ENCODE measurements at regions of chr2 and their contacts with region 1.

Region 1: GRCh38 chr2:190382851-190383250 is 25.3 kb upstream of the MFSD6 start:
- DNase-seq: peak; percentile 73
- CTCF ChIP-seq: peak; percentile 67

Region 2: GRCh38 chr2:190396271-190396670 is 13.4 kb after region 1 on chr2:
- CTCF ChIA-PET with region 1: interaction called, 12 read pairs
- POLR2A ChIA-PET with region 1: no interaction called
- DNase-seq: no peak
- CTCF ChIP-seq: no peak

Region 3: DNA sequence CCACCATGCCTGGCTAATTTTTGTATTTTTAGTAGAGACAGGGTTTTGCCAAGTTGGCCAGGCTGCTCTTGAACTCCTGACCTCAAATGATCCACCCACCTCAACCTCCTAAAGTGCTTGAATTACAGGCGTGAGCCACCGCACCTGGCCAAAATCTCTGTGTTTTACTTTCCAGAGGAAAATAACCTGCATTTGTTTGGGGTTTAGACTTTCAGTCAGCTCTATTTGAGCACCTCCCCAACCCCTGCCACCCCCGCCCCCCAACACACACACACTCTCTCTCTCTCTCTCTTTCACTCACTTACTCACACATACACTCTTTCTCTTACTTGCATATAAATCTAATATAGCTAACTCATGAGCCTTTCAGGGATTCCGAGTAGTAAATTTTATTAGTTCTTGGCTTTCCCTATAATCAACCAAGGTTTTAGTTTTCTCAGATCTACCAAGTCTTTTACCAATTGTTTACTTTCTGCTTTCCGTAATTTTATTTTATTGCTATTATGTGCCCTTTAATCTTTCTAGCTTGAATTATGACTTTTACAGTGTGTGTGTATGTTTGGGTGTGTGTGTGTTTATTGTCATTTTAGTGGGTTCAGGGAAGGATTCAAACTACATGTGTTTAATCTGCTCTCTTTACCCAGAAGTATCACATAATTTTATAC is 49.8 kb after region 1 on chr2:
- CTCF ChIA-PET with region 1: no interaction called
- POLR2A ChIA-PET with region 1: no interaction called
- DNase-seq: peak; percentile 38
- CTCF ChIP-seq: no peak

Region 4: DNA sequence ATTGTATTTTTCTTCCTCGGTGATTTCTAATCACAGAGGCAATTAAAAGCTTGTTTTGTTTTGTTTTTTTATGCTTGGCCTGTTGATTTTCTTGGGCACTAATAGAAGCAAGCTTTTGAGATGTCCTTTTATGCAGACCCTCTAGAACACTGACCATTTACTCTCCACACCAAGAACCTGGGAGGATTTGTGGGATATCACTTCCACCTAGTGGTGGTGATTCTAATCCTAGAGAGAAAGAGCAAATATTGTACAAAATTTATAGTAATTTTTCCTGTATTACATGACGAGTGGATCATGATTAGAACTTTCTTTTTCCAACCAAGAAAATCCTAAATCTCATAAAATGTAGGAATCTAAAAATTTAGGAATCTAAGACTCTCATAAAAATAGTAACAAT is 128.3 kb after region 1 on chr2:
- CTCF ChIA-PET with region 1: interaction called, 22 read pairs
- POLR2A ChIA-PET with region 1: no interaction called
- DNase-seq: no peak
- CTCF ChIP-seq: peak; percentile 31

Region 5: DNA sequence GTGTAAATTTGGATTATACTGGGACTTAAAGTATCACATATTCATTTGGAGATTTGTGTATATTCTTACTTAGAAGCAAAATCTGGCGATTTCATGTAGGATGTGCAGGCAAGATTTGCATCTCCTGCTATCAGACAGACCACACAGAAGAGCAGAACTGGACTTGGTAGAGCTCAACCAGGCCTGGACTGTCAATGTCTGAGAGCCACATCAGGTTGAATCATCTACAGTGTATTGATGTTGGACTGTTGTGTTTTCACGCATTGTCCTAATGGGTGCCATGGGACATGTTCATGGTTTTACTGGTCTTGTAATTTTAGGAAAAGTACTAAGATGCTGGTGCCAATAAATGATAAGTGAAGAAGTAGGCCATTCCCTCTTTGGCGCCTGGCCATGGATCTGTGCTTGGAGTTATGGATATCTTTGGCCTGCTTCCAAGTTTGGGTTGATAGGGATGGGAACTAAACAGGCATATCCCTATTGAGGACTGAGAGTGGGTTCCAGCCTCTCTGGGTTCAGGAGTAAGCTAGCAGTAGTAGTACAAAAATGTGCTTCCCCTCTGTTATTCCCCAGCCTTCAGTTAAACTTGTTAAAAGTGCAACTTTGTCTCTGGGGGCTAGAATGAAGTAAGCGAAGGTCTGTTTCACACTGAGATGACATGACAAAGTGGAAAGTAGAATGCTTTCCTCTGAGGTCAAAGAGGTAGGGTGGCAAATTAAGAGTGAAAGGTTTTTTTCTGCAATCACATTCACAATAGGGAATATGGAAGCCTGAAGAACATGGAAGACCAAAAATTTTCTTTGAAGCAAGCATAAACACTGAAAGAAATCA is 200.9 kb after region 1 on chr2:
- CTCF ChIA-PET with region 1: no interaction called
- POLR2A ChIA-PET with region 1: no interaction called
- DNase-seq: no peak
- CTCF ChIP-seq: no peak